ENCODE measurements at regions of chr17 and their contacts with region 1.

Region 1: GRCh38 chr17:19362277-19363113 is at the start of gene B9D1:
- H3K4me3 ChIP-seq: peak within 1 kb of the TSS; percentile 81
- H3K27ac ChIP-seq: peak within 1 kb of the TSS; percentile 47
- H3K4me1 ChIP-seq: peaks cover 5% of the 10 kb centered on the region
- CTCF ChIP-seq: peak; percentile 100

Region 2: GRCh38 chr17:19377602-19378392 is 15.3 kb after region 1 on chr17:
- CTCF ChIA-PET with region 1: interaction called, 33 read pairs
- POLR2A ChIA-PET with region 1: interaction called, 48 read pairs
- H3K4me3 ChIP-seq: peak overlapping the region; percentile 80
- H3K27ac ChIP-seq: peak overlapping the region; percentile 72
- H3K4me1 ChIP-seq: peaks cover 8% of the 10 kb centered on the region
- CTCF ChIP-seq: no peak; the same call in 1 of the 2 replicates

Region 3: DNA sequence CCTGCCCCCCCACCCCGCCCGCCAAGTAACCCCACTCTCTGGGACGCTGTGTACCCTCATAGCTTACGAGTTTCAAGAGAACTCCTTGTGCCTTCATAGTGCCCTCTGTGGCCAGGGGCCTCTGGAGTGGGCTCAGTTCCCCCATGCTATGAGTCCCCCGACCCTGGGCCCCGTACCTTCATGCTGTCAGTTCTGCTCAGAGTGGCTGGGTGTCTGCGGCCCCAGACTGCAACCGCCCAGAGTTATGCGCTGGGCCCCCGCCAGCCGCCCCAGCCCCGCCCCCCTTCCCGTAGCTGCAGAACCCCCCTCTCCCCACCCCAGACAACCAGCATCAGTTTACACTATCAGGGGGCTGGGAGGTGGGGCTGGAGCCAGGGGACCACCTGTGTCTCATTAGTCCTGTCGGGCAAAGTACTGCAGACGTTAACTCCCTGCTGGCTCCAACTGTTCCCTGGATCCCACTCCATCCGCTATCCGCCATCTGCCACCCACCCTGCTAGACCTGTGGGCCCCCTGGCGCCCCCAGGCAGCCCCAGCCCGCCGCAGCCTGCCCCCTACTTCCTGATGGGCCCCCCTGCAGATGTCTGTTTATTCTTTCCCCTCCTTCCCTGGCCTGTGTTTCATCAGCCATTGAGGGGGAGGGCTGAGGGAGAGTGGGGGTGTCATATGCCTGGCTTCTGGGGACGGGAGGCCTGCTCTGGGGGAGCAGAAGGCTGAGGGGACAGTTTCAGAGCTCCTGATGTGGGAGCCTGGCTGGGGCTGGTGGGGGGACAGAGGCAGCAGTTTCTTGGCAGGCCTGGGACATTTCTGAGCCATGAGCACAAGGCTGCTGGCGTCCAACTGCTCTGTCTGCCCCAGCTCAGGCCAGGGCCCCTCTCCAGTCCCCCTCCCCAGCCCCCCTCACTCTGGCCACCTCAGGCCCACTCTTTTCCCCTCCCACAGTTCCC is 24.8 kb after region 1 on chr17 and contains the start of gene MFAP4:
- CTCF ChIA-PET with region 1: interaction called, 11 read pairs
- POLR2A ChIA-PET with region 1: interaction called, 3 read pairs
- H3K4me3 ChIP-seq: no peak within 1 kb of the TSS
- H3K27ac ChIP-seq: peak within 1 kb of the TSS; percentile 53; the same call in 1 of the 2 replicates
- H3K4me1 ChIP-seq: peaks cover 17% of the 10 kb centered on the region
- CTCF ChIP-seq: no peak

Region 4: GRCh38 chr17:19424934-19425868 is 62.7 kb after region 1 on chr17:
- CTCF ChIA-PET with region 1: interaction called, 11 read pairs
- POLR2A ChIA-PET with region 1: no interaction called
- H3K4me3 ChIP-seq: no peak overlapping the region
- H3K27ac ChIP-seq: no peak overlapping the region
- H3K4me1 ChIP-seq: no peaks in the 10 kb centered on the region
- CTCF ChIP-seq: no peak

Region 5: DNA sequence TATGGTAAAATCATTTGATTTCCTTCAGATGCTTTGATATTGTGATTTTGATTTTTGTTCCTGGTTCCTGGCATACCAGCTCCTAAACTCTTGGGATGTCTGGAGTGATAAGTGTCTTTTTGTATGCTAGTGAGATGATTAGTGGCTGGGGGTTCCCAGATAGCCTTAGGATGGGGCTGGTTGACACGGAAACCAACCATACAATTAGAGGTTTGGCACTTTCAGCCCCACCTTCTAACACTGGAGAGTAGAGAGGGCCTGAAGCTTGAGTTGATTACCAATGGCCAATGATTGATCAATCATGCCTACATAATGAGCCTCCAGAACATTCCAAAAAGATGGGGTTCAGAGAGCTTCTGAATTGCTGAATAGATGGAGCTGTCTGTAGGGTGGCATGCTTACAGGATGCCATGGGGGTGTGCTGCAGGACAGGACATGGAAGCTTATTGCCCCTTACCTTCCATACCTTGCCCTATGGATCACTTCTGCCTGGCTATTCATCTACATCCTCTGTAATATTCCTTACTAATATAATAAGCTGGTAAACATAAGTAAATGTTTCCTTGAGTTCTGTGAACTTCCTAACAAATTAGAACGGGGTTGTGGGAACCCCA is 71.3 kb after region 1 on chr17:
- CTCF ChIA-PET with region 1: interaction called, 16 read pairs
- POLR2A ChIA-PET with region 1: no interaction called
- H3K4me3 ChIP-seq: no peak overlapping the region
- H3K27ac ChIP-seq: no peak overlapping the region
- H3K4me1 ChIP-seq: no peaks in the 10 kb centered on the region
- CTCF ChIP-seq: peak; percentile 36; the same call in 1 of the 2 replicates

Region 6: GRCh38 chr17:19447085-19447583 is 84.6 kb after region 1 on chr17:
- CTCF ChIA-PET with region 1: interaction called, 156 read pairs
- POLR2A ChIA-PET with region 1: interaction called, 7 read pairs
- H3K4me3 ChIP-seq: no peak overlapping the region
- H3K27ac ChIP-seq: no peak overlapping the region
- H3K4me1 ChIP-seq: peaks cover 8% of the 10 kb centered on the region
- CTCF ChIP-seq: peak; percentile 55; the same call in 1 of the 2 replicates

Region 7: GRCh38 chr17:19460700-19461099 is 98.2 kb after region 1 on chr17:
- CTCF ChIA-PET with region 1: interaction called, 29 read pairs
- POLR2A ChIA-PET with region 1: no interaction called
- H3K4me3 ChIP-seq: no peak overlapping the region
- H3K27ac ChIP-seq: no peak overlapping the region
- H3K4me1 ChIP-seq: no peaks in the 10 kb centered on the region
- CTCF ChIP-seq: no peak

Region 8: DNA sequence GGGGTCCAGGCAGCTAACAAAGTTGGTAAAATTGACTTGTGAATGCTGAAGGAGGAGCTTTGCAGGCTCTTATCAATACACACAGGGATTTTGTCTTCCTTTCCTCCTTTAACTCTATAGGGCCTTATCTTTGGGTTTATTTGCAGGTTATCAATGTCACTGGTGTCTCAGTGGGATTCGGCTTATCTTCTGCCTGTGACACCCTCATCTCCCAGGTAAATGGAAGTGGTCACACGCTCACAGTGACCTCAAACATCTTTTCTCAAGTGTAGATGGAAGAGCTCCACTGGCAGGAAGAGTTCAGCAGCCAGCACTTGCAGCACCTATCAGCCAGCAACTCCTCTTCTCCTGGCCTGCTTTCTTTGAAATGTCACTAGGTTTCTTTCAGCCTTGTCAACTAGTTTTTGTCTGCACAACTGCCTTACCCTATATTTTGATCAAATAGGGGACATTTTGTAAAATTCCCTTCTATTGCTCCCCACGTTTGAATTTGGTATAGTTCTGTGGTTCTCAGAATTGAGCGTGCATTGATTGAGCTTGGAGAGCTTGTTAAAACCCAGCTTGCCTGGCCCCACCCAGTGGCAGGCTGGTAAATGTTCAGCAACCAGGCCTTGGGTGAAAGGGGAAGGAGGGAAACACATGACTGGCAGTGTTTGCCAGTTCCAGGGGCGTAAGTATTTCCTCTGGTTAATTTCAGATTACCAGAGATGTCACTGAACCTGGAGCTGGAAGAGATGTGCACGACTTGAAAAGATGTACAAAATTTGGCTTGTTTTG is 184.0 kb after region 1 on chr17:
- CTCF ChIA-PET with region 1: no interaction called
- POLR2A ChIA-PET with region 1: no interaction called
- H3K4me3 ChIP-seq: no peak overlapping the region
- H3K27ac ChIP-seq: no peak overlapping the region
- H3K4me1 ChIP-seq: no peaks in the 10 kb centered on the region
- CTCF ChIP-seq: 0 out of 2 replicates have a peak, but pooled peaks have one; percentile 23

Measured in HEK293 (cell line).